ENCODE measurements at regions of chr15 and their contacts with region 1.

Region 1: DNA sequence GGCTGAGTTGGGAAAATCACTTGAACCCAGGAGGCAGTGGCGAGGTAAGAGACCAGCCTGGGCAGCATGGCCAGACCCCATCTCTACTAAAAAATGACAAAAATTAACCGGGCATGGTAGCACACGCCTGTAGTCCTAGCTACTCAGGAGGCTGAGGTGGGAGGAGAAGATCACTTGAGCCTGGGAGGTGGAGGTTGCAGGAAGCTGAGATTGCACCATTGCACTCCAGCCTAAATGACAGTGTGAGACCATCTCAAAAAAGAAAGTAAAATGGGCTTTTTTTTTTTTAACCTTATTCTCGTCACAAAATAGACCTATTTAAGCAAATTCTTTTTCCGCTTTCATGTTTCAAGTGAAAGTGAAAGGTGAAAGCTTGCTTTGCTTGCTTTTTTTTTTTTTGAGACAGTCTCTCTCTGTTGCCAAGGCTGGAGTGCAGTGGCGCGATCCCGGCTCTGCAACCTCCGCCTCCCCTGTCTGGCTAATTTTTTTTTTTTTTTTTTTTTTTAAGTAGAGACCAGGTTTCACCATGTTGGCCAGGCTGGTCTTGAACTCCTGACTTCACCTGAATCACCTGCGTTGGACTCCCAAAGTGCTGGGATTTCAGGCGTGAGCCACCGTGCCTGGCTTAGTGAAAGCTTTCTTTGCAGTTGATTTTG is 3.6 kb downstream of the PDIA3 start:
- DNase-seq: peak; percentile 70
- H3K4me3 Mint-ChIP-seq: peak overlapping the region; percentile 68
- H3K27ac Mint-ChIP-seq: peak overlapping the region; percentile 81
- H3K4me1 Mint-ChIP-seq: peaks cover 41% of the 10 kb centered on the region
- H3K27me3 Mint-ChIP-seq: no peaks in the 10 kb centered on the region

Region 2: GRCh38 chr15:43118829-43119228 is 631.0 kb before region 1 on chr15:
- CTCF ChIA-PET with region 1: no interaction called
- POLR2A ChIA-PET with region 1: no interaction called
- intact Hi-C with region 1: no loop called
- DNase-seq: no peak
- H3K4me3 Mint-ChIP-seq: no peak overlapping the region
- H3K27ac Mint-ChIP-seq: no peak overlapping the region
- H3K4me1 Mint-ChIP-seq: peaks cover 12% of the 10 kb centered on the region
- H3K27me3 Mint-ChIP-seq: peaks cover 6% of the 10 kb centered on the region

Region 3: DNA sequence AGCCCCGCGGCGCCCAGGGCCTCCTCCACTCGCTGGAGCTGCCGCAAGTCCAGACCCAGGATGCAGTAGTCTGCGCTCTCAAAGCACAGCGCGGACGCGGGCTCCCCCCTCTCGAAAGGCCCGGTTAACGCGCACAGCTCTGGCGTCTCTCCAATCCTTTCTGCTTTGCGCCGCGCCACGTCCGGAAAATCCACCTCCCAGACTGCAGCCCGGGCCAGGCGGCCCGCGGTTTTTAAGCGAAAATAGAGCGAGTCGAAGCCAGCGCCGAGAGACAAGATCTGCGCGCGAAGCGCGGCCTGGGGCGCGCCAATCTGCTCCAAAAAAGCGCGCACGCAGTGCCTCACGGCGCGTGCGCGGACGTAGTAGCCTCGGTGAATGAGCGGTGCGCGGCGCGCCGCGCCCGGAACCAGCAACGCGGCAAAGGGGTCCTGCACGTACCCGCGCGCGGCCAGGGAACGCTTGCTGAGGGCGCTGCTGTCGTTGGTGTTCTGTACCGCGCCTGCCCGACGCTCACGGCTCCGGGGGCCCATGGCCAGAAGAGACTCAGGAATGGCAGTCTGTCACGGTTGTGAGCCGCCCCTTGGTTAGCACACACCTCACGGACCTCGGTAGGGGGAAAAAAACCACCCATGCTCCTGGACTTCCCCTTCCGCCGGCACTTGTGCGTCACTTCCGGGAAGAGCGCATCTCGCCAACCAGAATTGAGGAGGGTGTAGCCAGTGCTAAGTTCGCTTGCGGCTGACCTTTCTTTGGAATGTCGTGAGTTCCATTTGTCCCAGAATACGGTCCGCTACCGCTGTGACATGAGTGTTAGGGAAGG is 419.6 kb before region 1 on chr15 and contains the start of gene LCMT2:
- CTCF ChIA-PET with region 1: no interaction called
- POLR2A ChIA-PET with region 1: no interaction called
- intact Hi-C with region 1: loop called (anchors 5 kb)
- DNase-seq: peak; percentile 94
- H3K4me3 Mint-ChIP-seq: peak within 1 kb of the TSS; percentile 92
- H3K27ac Mint-ChIP-seq: peak within 1 kb of the TSS; percentile 99
- H3K4me1 Mint-ChIP-seq: peaks cover 41% of the 10 kb centered on the region
- H3K27me3 Mint-ChIP-seq: no peaks in the 10 kb centered on the region
- total RNA-seq, gene LCMT2: 7.7 to 9.1 TPM

Region 4: DNA sequence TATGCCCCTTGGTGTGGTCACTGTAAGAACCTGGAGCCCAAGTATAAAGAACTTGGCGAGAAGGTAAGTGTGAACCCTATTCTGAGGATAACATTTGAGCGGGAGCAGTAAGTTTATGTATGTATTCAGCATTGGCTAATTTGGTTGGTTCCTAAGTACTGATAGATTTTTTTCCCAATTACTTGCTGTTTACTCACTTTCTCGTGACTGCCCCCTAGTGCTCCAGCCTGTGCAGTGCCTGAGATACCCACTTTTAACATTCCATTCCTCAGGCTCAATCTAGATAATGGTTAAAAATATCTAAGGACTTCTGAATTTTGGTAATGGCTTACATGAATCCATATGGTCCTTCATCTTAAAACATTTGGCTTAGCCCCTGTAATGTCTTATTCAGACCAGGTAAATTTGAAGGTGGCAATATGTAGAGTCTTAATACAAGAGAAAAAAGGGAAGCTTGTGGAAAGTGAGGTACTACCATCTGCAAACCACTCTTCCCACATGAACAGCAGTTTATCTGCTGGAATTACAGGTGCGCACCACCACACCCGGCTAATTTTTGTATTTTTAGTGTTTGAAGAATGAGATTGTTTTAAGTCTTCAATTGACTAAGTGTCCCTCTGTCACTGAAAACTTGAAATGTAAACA is 19.9 kb after region 1 on chr15:
- CTCF ChIA-PET with region 1: interaction called, 13 read pairs
- POLR2A ChIA-PET with region 1: interaction called, 3 read pairs
- intact Hi-C with region 1: loop called (anchors 2 kb)
- DNase-seq: peak; percentile 71
- H3K4me3 Mint-ChIP-seq: no peak overlapping the region
- H3K27ac Mint-ChIP-seq: peak overlapping the region; percentile 33
- H3K4me1 Mint-ChIP-seq: no peaks in the 10 kb centered on the region
- H3K27me3 Mint-ChIP-seq: no peaks in the 10 kb centered on the region

Region 5: GRCh38 chr15:43791993-43792760 is 42.4 kb after region 1 on chr15 and contains the start of gene SERF2:
- CTCF ChIA-PET with region 1: no interaction called
- POLR2A ChIA-PET with region 1: interaction called, 5 read pairs
- intact Hi-C with region 1: loop called (anchors 2 kb)
- DNase-seq: peak; percentile 100
- H3K4me3 Mint-ChIP-seq: peak within 1 kb of the TSS; percentile 95
- H3K27ac Mint-ChIP-seq: peak within 1 kb of the TSS; percentile 96
- H3K4me1 Mint-ChIP-seq: peaks cover 38% of the 10 kb centered on the region
- H3K27me3 Mint-ChIP-seq: no peaks in the 10 kb centered on the region
- total RNA-seq, gene SERF2: 787 to 817 TPM

Region 6: DNA sequence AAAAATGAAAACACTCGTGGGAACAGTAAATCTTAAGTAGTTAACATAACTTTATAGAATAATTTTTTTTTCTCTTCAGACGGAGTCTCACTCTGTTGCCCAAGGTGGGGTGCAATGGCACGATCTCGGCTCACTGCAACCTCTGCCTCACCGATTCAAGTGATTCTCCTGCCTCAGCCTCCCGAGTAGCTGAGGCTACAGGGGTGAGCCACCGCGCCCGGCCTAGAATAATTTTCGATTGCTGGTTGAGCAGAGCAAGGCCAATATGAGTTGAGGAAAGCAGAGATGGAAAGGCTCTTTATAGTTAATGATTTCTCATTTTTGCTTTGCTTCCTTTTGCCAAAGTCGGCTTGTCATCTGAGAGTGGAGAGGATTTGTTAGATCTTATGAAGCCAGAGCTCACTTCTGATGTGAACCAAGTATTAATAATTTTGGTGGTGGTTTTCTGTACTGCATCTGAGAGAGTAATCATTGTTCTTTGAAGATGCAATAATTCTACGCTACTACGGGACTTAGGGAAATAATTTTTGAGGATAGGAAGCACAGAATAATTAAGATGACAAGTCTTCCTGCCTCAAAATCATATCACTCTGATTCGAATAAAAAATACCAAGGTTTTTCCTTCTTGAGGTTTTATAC is 537.1 kb after region 1 on chr15:
- CTCF ChIA-PET with region 1: no interaction called
- POLR2A ChIA-PET with region 1: no interaction called
- intact Hi-C with region 1: loop called (anchors 5 kb)
- DNase-seq: no peak
- H3K4me3 Mint-ChIP-seq: peak overlapping the region; percentile 86
- H3K27ac Mint-ChIP-seq: peak overlapping the region; percentile 50
- H3K4me1 Mint-ChIP-seq: peaks cover 36% of the 10 kb centered on the region
- H3K27me3 Mint-ChIP-seq: peaks cover 3% of the 10 kb centered on the region

Measured in activated CD4-positive, alpha-beta memory T cell treated with anti-CD3 and anti-CD28 coated beads for 36 hours (primary cell).